OCI-LY7 (cell line): ENCODE measurements at regions of chr1 and their contacts with region 1.

Region 1: GRCh38 chr1:66446261-66447001 is 87.5 kb upstream of the SGIP1 start:
- DNase-seq: peak; percentile 85
- H3K4me3 ChIP-seq: peak overlapping the region; percentile 38
- H3K27ac ChIP-seq: peak overlapping the region; percentile 71
- H3K4me1 ChIP-seq: peaks cover 30% of the 10 kb centered on the region
- CTCF ChIP-seq: peak; percentile 93

Region 2: DNA sequence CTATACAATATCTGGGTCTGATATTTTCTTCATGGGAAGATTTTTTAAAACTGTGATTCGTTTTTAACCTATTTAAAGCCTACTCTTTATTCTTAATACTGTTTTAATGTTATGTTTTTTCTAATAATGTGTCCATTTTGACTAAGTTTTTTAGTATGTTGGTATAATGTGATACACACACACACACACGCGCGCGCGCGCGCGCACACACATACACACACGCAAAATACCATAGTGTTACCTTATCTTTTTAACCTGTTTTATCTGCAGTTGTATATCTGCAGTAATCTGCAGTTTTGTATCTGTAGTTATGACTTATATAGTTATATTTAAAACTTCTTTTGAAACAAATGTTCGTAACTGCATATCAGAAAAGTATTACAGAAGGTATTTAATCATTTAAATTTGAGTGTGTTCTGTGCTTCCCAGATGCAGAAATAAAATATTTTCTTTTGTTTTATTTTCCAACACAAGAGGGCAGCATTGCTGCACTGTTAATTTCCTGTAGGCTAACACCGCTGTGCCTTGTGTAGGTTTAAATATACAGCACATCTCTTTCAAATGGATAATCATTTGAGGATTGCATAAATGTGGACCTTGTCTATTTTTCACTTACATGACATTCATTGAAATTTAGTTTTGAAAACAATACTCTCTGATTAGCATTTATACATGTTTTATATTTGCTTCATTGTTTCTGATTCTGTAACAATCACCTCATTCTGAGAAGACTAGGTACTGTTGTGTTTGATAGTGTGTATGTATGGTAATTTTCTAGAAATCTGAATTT is 487.7 kb before region 1 on chr1:
- CTCF ChIA-PET with region 1: no interaction called
- POLR2A ChIA-PET with region 1: interaction called, 3 read pairs
- intact Hi-C with region 1: loop called (anchors 1 kb)
- DNase-seq: peak; percentile 59
- H3K4me3 ChIP-seq: no peak overlapping the region
- H3K27ac ChIP-seq: no peak overlapping the region
- H3K4me1 ChIP-seq: no peaks in the 10 kb centered on the region
- CTCF ChIP-seq: peak; percentile 91

Region 3: DNA sequence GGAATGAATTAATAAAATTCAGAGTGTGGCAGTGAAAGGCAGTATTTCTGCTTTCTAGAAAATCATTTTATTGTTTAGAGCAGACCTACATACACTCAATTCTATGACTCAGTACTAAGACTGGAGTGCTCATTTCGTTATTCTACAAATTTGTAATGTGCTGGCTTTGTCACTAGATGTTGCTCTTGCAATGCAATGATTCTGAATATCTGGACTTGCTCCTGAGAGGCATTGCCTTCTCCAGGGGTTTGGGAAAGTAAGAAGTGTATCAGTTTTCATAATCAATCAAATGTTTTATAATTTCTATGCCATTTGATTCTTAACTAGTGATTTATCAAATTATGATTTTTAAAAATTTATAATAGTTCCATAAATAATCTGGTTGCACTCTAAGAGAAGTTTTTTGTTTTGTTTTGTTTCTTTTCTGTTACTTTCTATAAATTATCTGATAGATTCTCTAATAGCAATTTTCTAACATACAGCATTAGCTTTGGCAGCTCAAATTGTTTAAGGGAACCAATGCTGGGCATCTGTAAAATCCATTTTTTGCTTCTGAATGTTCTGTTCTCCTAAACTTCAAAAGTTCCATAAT is 193.0 kb before region 1 on chr1:
- CTCF ChIA-PET with region 1: interaction called, 28 read pairs
- POLR2A ChIA-PET with region 1: interaction called, 29 read pairs
- intact Hi-C with region 1: loop called (anchors 1 kb)
- DNase-seq: peak; percentile 74
- H3K4me3 ChIP-seq: no peak overlapping the region
- H3K27ac ChIP-seq: no peak overlapping the region
- H3K4me1 ChIP-seq: peaks cover 18% of the 10 kb centered on the region
- CTCF ChIP-seq: peak; percentile 98

Region 4: DNA sequence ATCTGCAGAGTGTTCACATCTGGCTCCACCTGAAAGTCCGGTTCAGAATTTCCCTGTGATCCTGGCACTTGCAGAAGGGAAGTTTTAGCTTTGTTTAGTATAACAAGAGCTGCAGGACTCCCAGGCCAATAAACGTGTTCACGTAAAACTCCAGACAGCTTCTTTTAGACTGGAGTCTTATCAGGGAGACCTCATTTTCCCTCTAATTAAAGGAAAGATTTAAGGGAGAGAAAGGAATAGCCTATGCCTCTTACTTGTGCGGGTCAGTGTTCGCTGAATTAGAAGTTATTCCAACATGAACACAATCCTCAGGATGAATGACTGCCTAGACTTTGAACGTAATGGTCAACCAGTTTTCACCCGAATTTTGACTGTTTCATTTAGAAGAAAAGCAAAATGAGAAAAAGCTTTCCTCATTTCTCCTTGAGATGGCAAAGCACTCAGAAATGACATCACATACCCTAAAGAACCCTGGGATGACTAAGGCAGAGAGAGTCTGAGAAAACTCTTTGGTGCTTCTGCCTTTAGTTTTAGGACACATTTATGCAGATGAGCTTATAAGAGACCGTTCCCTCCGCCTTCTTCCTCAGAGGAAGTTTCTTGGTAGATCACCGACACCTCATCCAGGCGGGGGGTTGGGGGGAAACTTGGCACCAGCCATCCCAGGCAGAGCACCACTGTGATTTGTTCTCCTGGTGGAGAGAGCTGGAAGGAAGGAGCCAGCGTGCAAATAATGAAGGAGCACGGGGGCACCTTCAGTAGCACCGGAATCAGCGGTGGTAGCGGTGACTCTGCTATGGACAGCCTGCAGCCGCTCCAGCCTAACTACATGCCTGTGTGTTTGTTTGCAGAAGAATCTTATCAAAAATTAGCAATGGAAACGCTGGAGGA is 114.5 kb before region 1 on chr1:
- CTCF ChIA-PET with region 1: interaction called, 3 read pairs
- POLR2A ChIA-PET with region 1: interaction called, 13 read pairs
- intact Hi-C with region 1: loop called (anchors 2 kb)
- DNase-seq: peak; percentile 61
- H3K4me3 ChIP-seq: peak overlapping the region; percentile 77
- H3K27ac ChIP-seq: peak overlapping the region; percentile 93
- H3K4me1 ChIP-seq: peaks cover 71% of the 10 kb centered on the region
- CTCF ChIP-seq: no peak

Region 5: DNA sequence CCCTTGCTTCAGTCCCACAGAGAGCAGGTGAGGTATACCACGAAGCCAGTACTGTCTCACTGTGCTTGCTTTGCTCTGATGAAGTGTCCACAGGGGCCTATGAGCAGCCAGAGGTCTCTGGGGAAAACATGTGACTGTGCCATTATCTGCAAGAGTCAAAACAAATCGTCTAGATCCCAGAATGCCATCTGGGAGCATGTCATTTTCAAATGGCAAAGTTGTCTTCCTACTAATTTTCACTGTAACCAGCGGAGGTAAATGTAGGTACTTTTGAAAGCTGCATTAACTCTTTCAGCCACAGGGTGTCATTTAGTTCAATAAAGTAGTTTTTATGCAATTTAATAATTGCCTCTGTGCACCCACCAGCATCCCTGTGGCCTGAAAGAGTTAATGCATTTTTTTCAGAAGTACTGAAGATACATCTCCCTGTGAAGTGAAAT is 86.1 kb before region 1 on chr1:
- CTCF ChIA-PET with region 1: no interaction called
- POLR2A ChIA-PET with region 1: interaction called, 6 read pairs
- intact Hi-C with region 1: loop called (anchors 2 kb)
- DNase-seq: peak; percentile 56
- H3K4me3 ChIP-seq: no peak overlapping the region
- H3K27ac ChIP-seq: no peak overlapping the region
- H3K4me1 ChIP-seq: peaks cover 16% of the 10 kb centered on the region
- CTCF ChIP-seq: peak; percentile 82